ENCODE measurements at regions of chr2 and their contacts with region 1.

Region 1: GRCh38 chr2:229236456-229236855 is 34.6 kb downstream of the PID1 start:
- DNase-seq: no peak
- H3K4me3 ChIP-seq: no peak overlapping the region
- H3K27ac ChIP-seq: no peak overlapping the region
- H3K4me1 ChIP-seq: no peaks in the 10 kb centered on the region
- H3K27me3 ChIP-seq: no peaks in the 10 kb centered on the region
- CTCF ChIP-seq: no peak
- EP300 ChIP-seq: no peak
- POLR2A ChIP-seq: no peak

Region 2: DNA sequence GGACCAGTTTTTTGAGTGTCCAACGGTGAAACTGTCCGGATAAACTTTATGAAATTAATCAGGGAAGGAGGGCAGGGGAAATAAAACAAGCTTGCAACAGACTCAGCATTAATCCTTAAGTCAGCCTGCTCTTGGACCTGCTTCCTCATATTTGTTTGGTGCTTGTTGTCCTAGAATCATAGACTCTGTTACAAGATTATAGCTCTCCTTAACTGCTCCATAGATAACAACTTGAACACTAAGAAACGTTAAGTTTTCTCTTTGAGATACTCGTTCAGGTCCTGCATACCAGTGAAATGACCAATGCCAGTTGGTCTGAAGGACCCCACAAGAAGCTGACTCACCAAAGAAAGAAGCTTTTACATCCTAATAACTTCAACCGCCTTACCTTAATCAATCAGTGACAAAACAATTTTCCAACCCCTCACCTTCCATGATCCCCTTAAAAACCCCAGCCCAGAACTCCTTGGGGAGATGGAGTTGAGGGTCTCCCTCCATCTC is 458.6 kb before region 1 on chr2:
- in situ Hi-C with region 1: no loop called
- intact Hi-C with region 1: no loop called
- DNase-seq: no peak
- H3K4me3 ChIP-seq: no peak overlapping the region
- H3K27ac ChIP-seq: no peak overlapping the region
- H3K4me1 ChIP-seq: no peaks in the 10 kb centered on the region
- H3K27me3 ChIP-seq: no peaks in the 10 kb centered on the region
- CTCF ChIP-seq: no peak
- EP300 ChIP-seq: no peak
- POLR2A ChIP-seq: no peak

Region 3: DNA sequence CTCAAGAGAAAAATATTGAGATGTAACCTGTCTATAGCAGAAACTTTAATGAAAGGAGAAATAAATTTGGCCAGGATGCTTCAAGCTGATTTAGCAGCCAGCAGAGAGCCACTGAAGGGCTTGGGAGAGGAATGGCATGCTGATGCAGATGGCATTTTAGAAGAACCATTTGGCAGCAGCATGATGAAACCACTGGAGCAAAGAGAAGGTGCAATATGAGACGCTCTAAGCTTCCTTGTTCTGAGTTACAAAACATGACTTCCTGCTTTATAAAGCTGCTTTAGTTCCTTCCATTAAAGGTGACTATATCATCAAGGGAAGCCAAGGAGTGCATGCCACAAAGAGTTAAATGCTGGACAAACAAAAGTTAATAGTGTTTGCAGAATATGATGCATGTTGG is 155.0 kb before region 1 on chr2:
- in situ Hi-C with region 1: no loop called
- intact Hi-C with region 1: no loop called
- DNase-seq: no peak
- H3K4me3 ChIP-seq: no peak overlapping the region
- H3K27ac ChIP-seq: no peak overlapping the region
- H3K4me1 ChIP-seq: peaks cover 0 to 36% (median 16%) of the 10 kb centered on the region in 4 donors
- H3K27me3 ChIP-seq: no peaks in the 10 kb centered on the region
- CTCF ChIP-seq: no peak
- EP300 ChIP-seq: no peak
- POLR2A ChIP-seq: no peak

Region 4: GRCh38 chr2:229254206-229254605 is 17.8 kb after region 1 on chr2:
- in situ Hi-C with region 1: no loop called
- intact Hi-C with region 1: loop called (anchors 1 kb)
- DNase-seq: no peak
- H3K4me3 ChIP-seq: no peak overlapping the region
- H3K27ac ChIP-seq: peak overlapping the region in 1 of 4 donors; percentile 21
- H3K4me1 ChIP-seq: no peaks in the 10 kb centered on the region
- H3K27me3 ChIP-seq: no peaks in the 10 kb centered on the region
- CTCF ChIP-seq: no peak
- EP300 ChIP-seq: no peak
- POLR2A ChIP-seq: no peak

Region 5: GRCh38 chr2:229768235-229768634 is 531.8 kb after region 1 on chr2:
- in situ Hi-C with region 1: no loop called
- intact Hi-C with region 1: no loop called
- DNase-seq: no peak
- H3K4me3 ChIP-seq: no peak overlapping the region
- H3K27ac ChIP-seq: no peak overlapping the region
- H3K4me1 ChIP-seq: no peaks in the 10 kb centered on the region
- H3K27me3 ChIP-seq: no peaks in the 10 kb centered on the region
- CTCF ChIP-seq: no peak
- EP300 ChIP-seq: no peak
- POLR2A ChIP-seq: no peak

Measured in transverse colon (tissue), 4 donors.